PC-9 (cell line): ENCODE measurements at regions of chr12 and their contacts with region 1.

Region 1: DNA sequence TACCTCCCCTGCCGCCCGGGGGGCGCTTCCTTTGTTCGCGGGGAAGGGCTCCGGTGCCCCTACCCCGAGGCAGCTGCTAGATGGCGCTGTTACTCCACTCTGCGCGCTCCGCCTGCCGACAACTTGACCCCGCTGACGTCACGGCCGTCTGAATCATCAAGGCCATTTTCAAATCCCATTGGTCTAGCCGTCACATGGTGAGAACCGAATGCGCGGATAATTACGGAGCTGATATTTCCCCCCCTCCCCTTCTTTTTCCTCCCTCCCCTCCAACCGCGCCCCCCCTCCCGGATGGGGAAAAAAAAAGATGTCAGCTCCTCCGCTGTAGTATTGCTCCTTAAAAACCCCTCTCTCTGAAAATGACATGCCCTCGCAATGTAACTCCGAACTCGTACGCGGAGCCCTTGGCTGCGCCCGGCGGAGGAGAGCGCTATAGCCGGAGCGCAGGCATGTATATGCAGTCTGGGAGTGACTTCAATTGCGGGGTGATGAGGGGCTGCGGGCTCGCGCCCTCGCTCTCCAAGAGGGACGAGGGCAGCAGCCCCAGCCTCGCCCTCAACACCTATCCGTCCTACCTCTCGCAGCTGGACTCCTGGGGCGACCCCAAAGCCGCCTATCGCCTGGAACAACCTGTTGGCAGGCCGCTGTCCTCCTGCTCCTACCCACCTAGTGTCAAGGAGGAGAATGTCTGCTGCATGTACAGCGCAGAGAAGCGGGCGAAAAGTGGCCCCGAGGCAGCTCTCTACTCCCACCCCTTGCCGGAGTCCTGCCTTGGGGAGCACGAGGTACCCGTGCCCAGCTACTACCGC is at the start of gene HOXC10:
- DNase-seq: peak; percentile 58 to 77
- H3K4me3 ChIP-seq: peak within 1 kb of the TSS; percentile 8; the same call in 1 of the 2 replicates
- H3K27ac ChIP-seq: no peak within 1 kb of the TSS
- H3K4me1 ChIP-seq: peaks cover 22% of the 10 kb centered on the region
- H3K27me3 ChIP-seq: no peaks in the 10 kb centered on the region
- CTCF ChIP-seq: peak; percentile 68
- total RNA-seq, gene HOXC10: 1.1 and 1.4 TPM in 2 replicates

Region 2: DNA sequence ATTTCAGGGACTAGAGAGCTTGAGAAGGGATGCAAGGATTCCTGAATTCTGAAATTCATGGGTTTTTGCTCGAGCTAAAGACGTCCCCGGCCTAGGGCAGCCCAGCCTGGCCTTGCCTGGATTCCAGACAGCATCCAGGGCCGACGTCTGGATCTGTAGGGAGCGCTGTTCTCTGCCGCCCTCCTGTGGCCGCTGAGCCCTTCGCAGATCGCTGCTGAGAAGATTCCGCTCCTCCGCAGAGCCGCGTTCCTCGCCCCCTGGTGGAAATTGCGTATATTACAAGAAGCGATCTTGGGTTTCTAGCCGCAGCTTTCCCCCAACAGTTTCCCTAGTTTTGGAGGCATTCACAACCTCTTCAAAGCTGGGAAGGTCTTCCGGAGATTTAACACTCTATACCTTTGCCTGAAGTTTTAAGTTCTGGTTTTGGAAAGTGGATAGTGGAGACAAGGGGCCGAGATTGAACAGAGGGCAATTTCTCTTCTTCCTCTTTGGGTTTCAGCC is 238.5 kb before region 1 on chr12:
- CTCF ChIA-PET with region 1: no interaction called
- POLR2A ChIA-PET with region 1: no interaction called
- intact Hi-C with region 1: loop called (anchors 2 kb)
- DNase-seq: peak; percentile 74 to 89
- H3K4me3 ChIP-seq: no peak overlapping the region
- H3K27ac ChIP-seq: no peak overlapping the region
- H3K4me1 ChIP-seq: no peaks in the 10 kb centered on the region
- H3K27me3 ChIP-seq: 0 out of 2 replicates have a peak, but pooled peaks cover 4% of the 10 kb centered on the region
- CTCF ChIP-seq: peak; percentile 99

Region 3: DNA sequence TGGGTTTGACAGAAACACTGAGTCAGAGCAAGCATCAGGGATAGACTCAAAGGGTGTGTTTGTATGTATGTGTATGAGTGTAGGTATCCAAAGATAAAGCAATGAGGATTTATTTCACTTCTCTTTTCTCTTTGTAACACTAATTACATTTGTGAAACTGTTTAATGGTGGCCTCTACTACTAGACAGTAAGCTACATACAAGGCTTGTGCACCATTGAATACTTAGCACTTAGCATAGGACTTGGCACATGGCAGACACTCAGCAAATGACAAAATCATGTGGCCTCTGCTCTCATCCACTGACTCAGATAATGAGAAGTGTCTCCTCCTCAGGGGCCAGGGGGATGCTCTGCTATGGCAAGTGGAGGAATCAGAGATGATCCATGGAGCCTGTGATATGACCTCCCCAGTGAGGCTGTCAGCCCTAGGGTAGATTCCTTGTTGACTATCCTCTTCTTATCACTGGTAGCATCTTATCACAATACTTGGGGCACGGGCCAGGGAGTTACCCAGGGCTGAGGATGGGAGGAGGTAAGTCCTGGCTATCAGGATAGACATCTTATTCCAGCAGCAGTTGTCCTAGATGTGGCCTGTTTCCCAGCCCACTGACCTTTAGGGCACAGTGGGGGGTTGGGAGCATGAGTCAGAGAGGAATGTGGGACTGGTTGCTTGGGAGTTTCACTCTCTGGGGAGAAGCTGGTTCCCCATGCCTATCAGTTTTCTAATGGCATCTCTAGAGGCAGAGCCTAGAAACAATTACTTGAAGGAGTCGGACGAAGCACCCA is 117.7 kb before region 1 on chr12:
- CTCF ChIA-PET with region 1: interaction called, 3 read pairs
- POLR2A ChIA-PET with region 1: no interaction called
- intact Hi-C with region 1: loop called (anchors 5 kb)
- DNase-seq: peak; percentile 93
- H3K4me3 ChIP-seq: no peak overlapping the region
- H3K27ac ChIP-seq: peak overlapping the region; percentile 88
- H3K4me1 ChIP-seq: peaks cover 49% of the 10 kb centered on the region
- H3K27me3 ChIP-seq: no peaks in the 10 kb centered on the region
- CTCF ChIP-seq: no peak

Region 4: GRCh38 chr12:54032627-54033100 is 47.6 kb after region 1 on chr12 and contains the start of gene HOXC5:
- CTCF ChIA-PET with region 1: interaction called, 13 read pairs
- POLR2A ChIA-PET with region 1: no interaction called
- intact Hi-C with region 1: no loop called
- DNase-seq: peak; percentile 50 to 68
- H3K4me3 ChIP-seq: peak within 1 kb of the TSS; percentile 47
- H3K27ac ChIP-seq: no peak within 1 kb of the TSS
- H3K4me1 ChIP-seq: 0 out of 2 replicates have a peak, but pooled peaks cover 5% of the 10 kb centered on the region
- H3K27me3 ChIP-seq: no peaks in the 10 kb centered on the region
- CTCF ChIP-seq: peak; percentile 98
- total RNA-seq, gene HOXC5: 0.61 and 1.8 TPM in 2 replicates